IMR-90 (cell line): ENCODE measurements at regions of chr2 and their contacts with region 1.

Region 1: GRCh38 chr2:45484965-45485364 is 126.1 kb downstream of the SRBD1 start:
- DNase-seq: no peak
- ATAC-seq: no peak
- H3K4me3 ChIP-seq: no peak overlapping the region
- H3K27ac ChIP-seq: no peak overlapping the region
- H3K4me1 ChIP-seq: no peaks in the 10 kb centered on the region
- H3K27me3 ChIP-seq: no peaks in the 10 kb centered on the region
- CTCF ChIP-seq: no peak
- POLR2A ChIP-seq: no peak
- RAD21 ChIP-seq: no peak

Region 2: GRCh38 chr2:45370362-45370761 is 114.6 kb before region 1 on chr2:
- CTCF ChIA-PET with region 1: no interaction called
- POLR2A ChIA-PET with region 1: no interaction called
- dilution Hi-C with region 1: no loop called
- in situ Hi-C with region 1: no loop called
- intact Hi-C with region 1: loop called (anchors 5 kb)
- DNase-seq: peak; percentile 53
- ATAC-seq: no peak
- H3K4me3 ChIP-seq: no peak overlapping the region
- H3K27ac ChIP-seq: no peak overlapping the region
- H3K4me1 ChIP-seq: no peaks in the 10 kb centered on the region
- H3K27me3 ChIP-seq: no peaks in the 10 kb centered on the region
- CTCF ChIP-seq: no peak
- POLR2A ChIP-seq: no peak
- RAD21 ChIP-seq: no peak